Activated CD8-positive, alpha-beta memory T cell treated with anti-CD3 and anti-CD28 coated beads, Interleukin-2, amount 10 ng/mL, durations not matched to agents 7 days and 5 days (primary cell): ENCODE measurements at regions of chr16 and their contacts with region 1.

Region 1: GRCh38 chr16:29961479-29962343 is at the start of gene TMEM219:
- DNase-seq: peak; percentile 94
- ATAC-seq: peak; percentile 95
- H3K4me3 Mint-ChIP-seq: peak within 1 kb of the TSS; percentile 88
- H3K27ac Mint-ChIP-seq: peak within 1 kb of the TSS; percentile 86
- H3K4me1 Mint-ChIP-seq: peaks cover 26% of the 10 kb centered on the region
- H3K27me3 Mint-ChIP-seq: no peaks in the 10 kb centered on the region
- total RNA-seq, gene TMEM219: 56.9 to 67.6 TPM

Region 2: DNA sequence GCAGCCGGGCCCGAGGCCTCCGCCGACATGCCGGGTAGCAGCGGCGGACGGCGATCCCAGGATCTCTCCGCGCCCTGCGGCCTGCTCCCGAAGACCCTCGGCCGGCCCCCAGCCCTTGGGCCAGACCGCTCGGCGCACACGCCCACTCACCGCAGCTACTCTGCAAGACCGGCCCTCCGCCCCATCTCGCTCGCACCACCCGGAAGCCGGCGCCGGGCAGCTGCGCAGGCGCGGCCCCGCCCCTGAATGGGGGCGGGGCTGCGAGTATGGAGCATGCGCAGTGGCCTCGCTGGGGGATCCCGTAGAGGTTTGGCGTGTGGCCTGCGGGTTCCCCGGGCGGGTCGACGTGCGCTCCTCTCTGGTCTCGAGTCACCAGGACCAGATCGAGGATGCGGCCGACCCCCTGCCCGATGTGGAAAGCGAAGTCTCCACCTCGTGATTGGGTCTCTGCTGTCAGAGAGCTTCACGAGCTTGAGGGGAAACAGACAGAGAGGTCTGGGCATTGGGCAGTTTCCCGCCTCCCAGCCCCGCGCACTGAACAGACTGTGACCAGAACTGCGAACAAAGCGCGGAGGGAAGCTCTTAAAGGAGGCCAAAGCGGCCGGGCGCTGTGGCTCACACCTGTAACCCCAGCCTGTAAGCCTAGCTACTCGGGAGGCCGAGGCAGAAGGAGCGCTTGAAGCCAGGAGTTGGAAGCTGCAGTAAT is 35.6 kb before region 1 on chr16 and contains the start of gene KCTD13:
- CTCF ChIA-PET with region 1: interaction called, 17 read pairs
- DNase-seq: peak; percentile 90
- ATAC-seq: peak; percentile 95
- H3K4me3 Mint-ChIP-seq: peak within 1 kb of the TSS; percentile 89
- H3K27ac Mint-ChIP-seq: peak within 1 kb of the TSS; percentile 93
- H3K4me1 Mint-ChIP-seq: peaks cover 30% of the 10 kb centered on the region
- H3K27me3 Mint-ChIP-seq: peaks cover 2% of the 10 kb centered on the region
- total RNA-seq, gene KCTD13: 44.6 to 48.4 TPM